ENCODE measurements at regions of chr2 and their contacts with region 1.

Region 1: DNA sequence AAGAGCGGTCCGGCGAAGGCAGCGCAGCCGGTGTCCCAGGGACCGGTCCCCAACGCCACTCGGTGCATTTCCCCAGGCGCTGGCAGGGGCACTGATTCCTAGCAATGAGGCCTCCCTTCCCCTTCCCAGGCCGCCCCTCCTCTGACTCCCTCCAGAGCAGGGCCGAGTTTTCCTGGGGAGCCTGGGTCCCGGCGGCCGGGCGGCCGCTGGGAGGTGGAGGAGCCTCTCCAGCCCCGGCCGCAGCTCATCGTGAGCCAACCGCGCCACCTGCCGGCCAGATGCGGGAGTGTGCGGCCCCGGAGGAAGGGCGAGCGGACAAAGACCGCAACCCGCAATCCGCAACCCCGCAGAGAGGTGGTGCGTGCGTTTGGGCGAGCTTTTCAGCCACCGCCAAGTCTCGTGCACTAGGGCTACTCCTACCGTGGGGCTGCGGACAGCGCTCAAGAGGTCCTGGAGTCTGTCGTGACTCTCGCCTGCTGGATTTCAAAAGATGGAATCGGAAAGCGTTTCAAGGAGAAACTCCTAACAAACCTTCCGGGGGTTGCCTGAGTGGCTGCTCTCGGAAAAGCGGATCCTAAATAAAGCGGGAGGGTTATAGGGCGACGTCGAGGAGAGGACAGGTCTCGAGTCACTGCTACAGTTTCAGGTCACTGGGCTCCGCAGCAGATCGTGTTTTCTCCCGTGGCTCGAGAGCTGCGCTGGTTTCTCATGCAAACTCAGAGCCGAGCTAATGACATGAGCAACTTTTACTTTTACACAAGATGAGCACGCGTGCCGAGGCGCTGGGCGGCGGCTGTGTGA is 1.5 kb upstream of the EPHA4 start:
- DNase-seq: peak; percentile 71
- H3K4me3 Mint-ChIP-seq: peak overlapping the region; percentile 69
- H3K27ac Mint-ChIP-seq: no peak overlapping the region
- H3K4me1 Mint-ChIP-seq: peaks cover 23% of the 10 kb centered on the region
- H3K27me3 Mint-ChIP-seq: peaks cover 66% of the 10 kb centered on the region

Region 2: GRCh38 chr2:219736209-219736608 is 1837.4 kb before region 1 on chr2:
- intact Hi-C with region 1: loop called (anchors 10 kb)
- DNase-seq: no peak
- H3K4me3 Mint-ChIP-seq: no peak overlapping the region
- H3K27ac Mint-ChIP-seq: no peak overlapping the region
- H3K4me1 Mint-ChIP-seq: no peaks in the 10 kb centered on the region
- H3K27me3 Mint-ChIP-seq: peaks cover 2% of the 10 kb centered on the region

Region 3: GRCh38 chr2:220687231-220687843 is 886.3 kb before region 1 on chr2:
- intact Hi-C with region 1: loop called (anchors 1 kb)
- DNase-seq: peak; percentile 30
- H3K4me3 Mint-ChIP-seq: no peak overlapping the region
- H3K27ac Mint-ChIP-seq: no peak overlapping the region
- H3K4me1 Mint-ChIP-seq: peaks cover 1% of the 10 kb centered on the region
- H3K27me3 Mint-ChIP-seq: peaks cover 2% of the 10 kb centered on the region

Region 4: DNA sequence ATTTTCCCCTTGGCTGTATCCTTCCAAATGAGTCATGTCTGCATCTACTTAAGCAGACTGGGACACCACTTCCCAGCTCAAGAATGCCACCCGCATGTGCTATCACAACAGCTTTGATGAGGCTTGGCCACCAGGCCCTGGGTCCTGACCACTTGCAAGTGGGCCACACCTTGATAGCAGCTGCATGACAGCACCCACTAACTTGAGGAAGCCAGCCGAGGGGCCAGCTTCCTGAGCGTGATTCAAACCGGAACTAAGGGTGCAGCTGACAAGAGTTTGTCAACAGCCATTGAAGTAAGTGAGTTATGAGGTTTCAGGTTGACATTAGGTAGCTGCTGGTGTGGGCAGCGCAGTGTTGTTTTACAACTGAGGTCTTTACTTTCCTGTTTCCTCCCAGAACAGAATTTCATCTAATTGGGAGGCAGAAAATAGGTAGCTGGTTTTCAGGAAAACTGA is 55.9 kb before region 1 on chr2:
- intact Hi-C with region 1: loop called (anchors 1 kb)
- DNase-seq: peak; percentile 73
- H3K4me3 Mint-ChIP-seq: no peak overlapping the region
- H3K27ac Mint-ChIP-seq: no peak overlapping the region
- H3K4me1 Mint-ChIP-seq: peaks cover 25% of the 10 kb centered on the region
- H3K27me3 Mint-ChIP-seq: peaks cover 7% of the 10 kb centered on the region

Region 5: DNA sequence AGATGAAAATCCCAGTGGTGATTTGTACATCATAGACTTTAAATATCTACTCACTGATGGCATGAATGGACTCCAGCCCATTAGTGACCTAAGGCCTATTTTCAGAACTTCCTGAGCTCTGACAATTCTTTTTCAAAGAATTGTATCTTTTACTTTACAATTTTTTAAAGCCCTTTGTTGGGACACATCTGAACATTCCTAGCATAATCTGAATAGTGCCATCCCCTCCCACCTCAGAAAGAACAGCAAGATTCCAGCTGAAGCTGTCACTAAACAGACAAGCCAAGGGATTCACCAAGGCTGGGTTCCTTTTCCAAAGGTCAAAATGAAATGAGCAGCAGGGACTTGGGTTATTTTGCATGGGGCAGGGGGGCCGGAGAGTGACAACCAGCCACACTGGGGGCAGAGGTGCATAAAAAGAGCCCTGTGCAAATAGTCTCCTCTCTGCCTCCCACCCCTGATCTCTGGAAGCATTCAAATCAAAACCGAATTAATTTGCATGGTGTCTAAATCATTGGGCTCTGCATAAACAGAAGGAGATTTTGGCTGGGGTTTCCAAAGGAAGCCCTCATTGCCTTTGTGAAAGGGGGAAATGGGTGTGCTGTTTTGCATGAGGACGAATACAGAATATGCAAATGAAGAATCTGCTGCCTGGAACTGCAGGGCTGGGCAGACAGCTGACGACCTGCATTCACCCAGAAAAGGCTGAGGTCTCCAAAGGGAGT is 18.7 kb before region 1 on chr2:
- intact Hi-C with region 1: no loop called
- DNase-seq: no peak
- H3K4me3 Mint-ChIP-seq: no peak overlapping the region
- H3K27ac Mint-ChIP-seq: no peak overlapping the region
- H3K4me1 Mint-ChIP-seq: peaks cover 4% of the 10 kb centered on the region
- H3K27me3 Mint-ChIP-seq: peaks cover 1% of the 10 kb centered on the region

Region 6: DNA sequence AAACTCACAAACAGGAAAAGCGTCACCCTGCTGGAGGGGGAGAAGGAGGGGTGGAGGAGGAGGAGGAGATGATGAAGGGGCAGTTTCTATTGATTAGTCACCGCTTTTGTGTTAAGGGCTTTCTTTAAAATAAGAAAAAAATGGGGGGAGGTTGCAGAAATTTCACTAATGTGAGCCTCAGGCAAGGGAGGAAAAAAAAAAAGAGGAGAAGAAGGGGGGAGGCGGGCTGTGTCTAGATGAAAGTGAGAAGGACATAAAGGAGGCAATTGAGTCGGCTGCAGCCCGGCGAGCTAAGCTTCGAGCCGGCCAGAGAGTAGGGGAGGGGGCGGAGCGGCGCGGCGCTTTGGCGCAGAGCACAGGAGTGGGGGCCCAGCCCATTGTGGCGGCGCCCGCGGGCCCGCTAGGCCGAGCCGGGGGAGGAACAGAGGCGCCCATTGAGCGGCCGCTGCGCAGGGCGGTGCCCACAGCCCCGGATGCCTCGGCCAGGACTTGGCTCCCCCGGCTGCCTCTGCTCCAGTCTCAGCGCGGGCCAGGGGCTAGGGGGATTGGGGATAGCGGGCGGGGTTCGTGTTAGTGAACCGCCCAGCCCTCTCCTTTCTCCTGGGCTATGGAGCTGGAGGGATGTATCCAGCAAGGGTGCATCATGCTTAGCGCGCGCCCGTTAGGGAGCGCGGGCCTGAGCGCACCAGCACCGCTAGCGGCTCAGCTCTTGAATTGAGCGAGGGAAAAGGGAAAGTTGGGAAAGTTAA is 717.3 kb after region 1 on chr2:
- intact Hi-C with region 1: loop called (anchors 5 kb)
- DNase-seq: no peak
- H3K4me3 Mint-ChIP-seq: no peak overlapping the region
- H3K27ac Mint-ChIP-seq: no peak overlapping the region
- H3K4me1 Mint-ChIP-seq: peaks cover 8% of the 10 kb centered on the region
- H3K27me3 Mint-ChIP-seq: peaks cover 93% of the 10 kb centered on the region

Measured in activated T-helper 2 cell treated with anti-CD3 and anti-CD28 coated beads, Interferon-gamma antibody, Interleukin-2, Interleukin-4, amounts not matched to agents 10 μg/mL and 5 μg/mL and 100 μg/mL, durations not matched to agents 14 hours and 24 hours and 36 hours (primary cell).